HCT116 (cell line): ENCODE measurements at regions of chr4 and their contacts with region 1.

Region 1: DNA sequence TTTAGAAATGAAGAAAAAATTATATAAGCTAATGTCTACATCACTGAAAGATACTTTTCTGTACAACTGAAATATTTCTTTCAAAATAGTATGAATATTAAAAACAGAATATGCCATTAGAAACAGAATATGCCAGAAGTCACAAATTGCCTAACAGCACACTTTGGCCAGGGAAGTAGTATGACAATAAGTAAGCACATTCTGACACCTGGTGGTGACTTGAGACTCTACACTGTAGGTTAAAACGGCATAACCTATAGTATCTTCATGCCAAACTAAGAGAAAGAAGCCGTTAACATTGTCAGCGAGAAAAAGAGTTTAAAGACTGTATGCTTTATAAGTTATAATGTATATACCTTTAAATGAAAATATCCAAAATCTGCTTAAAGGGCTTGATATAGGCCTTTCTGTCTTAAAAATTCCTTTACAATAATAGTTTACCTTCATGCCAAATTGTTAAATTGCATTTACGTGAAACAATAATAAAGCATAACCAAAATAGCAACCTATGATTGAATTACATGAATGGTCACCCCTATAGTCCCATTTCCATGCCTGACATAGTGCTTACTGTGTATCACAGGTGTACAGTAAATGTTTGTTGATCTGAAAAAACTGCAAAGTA is 32.8 kb downstream of the FAM13A start:
- DNase-seq: peak; percentile 65
- ATAC-seq: peak; percentile 93
- H3K4me3 ChIP-seq: no peak overlapping the region
- H3K27ac ChIP-seq: no peak overlapping the region
- H3K4me1 ChIP-seq: no peaks in the 10 kb centered on the region
- H3K27me3 ChIP-seq: no peaks in the 10 kb centered on the region
- CTCF ChIP-seq: peak; percentile 70 to 76 (median 75)
- POLR2A ChIP-seq: no peak
- RAD21 ChIP-seq: peak; percentile 91

Region 2: GRCh38 chr4:88526221-88526815 is 497.8 kb before region 1 on chr4:
- CTCF ChIA-PET with region 1: interaction called, 7 read pairs
- POLR2A ChIA-PET with region 1: no interaction called
- RAD21 ChIA-PET with region 1: no interaction called
- intact Hi-C with region 1: loop called (anchors 1 kb)
- DNase-seq: no peak
- ATAC-seq: no peak
- H3K4me3 ChIP-seq: no peak overlapping the region
- H3K27ac ChIP-seq: no peak overlapping the region
- H3K4me1 ChIP-seq: peaks cover 8 to 24% of the 10 kb centered on the region in 2 experiments; a peak in 3 of 4 replicates
- H3K27me3 ChIP-seq: no peaks in the 10 kb centered on the region
- CTCF ChIP-seq: peak in 2 of 3 experiments; percentile 37 to 39; a peak in 3 of 6 replicates
- POLR2A ChIP-seq: no peak
- RAD21 ChIP-seq: peak; percentile 44

Region 3: DNA sequence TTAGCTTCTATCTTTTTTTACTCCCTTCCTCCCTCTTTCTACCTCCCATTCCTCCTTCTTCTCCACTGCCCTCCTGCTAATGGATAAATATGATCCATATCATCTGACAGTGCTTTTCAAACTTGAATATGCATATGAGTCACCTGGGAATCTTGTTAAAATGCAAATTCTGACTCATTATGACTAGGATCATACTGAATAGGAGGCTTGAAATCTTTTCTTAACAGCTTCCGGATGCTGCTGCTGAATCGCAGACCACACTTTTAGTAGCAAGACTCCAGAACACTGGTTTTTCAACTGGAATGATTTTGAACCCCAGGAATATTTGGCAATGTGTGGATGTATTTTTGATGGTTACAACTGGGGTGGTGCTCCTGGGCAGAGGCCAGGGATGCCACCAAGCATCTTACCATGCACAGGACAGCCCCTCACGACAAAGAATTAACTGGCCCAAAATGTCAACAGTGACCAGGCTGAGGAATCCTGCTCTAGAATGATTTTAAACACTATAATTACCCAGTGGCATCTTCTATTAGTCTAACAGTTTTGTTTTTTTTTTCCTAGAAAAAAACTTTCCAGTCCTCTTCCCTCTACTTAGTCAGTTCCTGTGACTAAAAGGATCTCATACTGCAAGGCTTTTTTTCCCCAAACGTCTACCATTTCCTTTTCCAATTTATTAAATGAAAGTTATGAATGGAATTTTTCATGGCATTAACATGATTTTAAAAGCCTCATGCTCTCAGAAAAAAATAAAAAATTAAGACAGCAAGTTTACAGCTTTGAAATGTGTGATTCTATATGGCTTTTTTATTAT is 490.0 kb before region 1 on chr4:
- CTCF ChIA-PET with region 1: interaction called, 21 read pairs
- POLR2A ChIA-PET with region 1: no interaction called
- RAD21 ChIA-PET with region 1: interaction called, 3 to 4 read pairs
- intact Hi-C with region 1: no loop called
- DNase-seq: no peak
- ATAC-seq: no peak
- H3K4me3 ChIP-seq: no peak overlapping the region
- H3K27ac ChIP-seq: no peak overlapping the region
- H3K4me1 ChIP-seq: no peaks in the 10 kb centered on the region
- H3K27me3 ChIP-seq: no peaks in the 10 kb centered on the region
- CTCF ChIP-seq: no peak
- POLR2A ChIP-seq: no peak
- RAD21 ChIP-seq: no peak

Region 4: DNA sequence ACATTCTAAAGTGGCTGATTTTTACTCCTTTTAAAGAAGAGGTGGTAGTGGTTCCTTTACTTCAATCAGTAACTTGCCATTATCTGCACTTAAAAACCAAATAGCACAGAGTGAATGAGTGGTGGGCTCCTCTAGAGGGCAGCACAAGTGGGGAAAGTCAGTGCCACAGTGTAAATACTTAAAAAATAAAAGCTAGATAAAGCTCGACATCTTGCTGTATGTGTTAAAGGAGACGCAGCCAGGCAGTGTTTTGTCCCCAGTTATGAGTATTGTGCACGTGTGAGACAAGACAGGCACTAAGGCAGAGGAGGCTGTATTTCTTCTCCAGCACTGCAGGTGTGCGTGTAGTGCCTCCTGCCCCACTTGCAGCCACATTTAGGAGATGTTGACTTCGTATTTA is 351.2 kb before region 1 on chr4:
- CTCF ChIA-PET with region 1: interaction called, 10 read pairs
- POLR2A ChIA-PET with region 1: no interaction called
- RAD21 ChIA-PET with region 1: no interaction called
- intact Hi-C with region 1: no loop called
- DNase-seq: no peak
- ATAC-seq: peak; percentile 94
- H3K4me3 ChIP-seq: no peak overlapping the region
- H3K27ac ChIP-seq: no peak overlapping the region
- H3K4me1 ChIP-seq: no peaks in the 10 kb centered on the region
- H3K27me3 ChIP-seq: no peaks in the 10 kb centered on the region
- CTCF ChIP-seq: peak; percentile 33 to 78 (median 74); a peak in 5 of 6 replicates
- POLR2A ChIP-seq: no peak
- RAD21 ChIP-seq: peak; percentile 41; the same call in 1 of the 2 replicates

Region 5: GRCh38 chr4:88706574-88706973 is 317.6 kb before region 1 on chr4:
- CTCF ChIA-PET with region 1: interaction called, 10 read pairs
- POLR2A ChIA-PET with region 1: no interaction called
- RAD21 ChIA-PET with region 1: no interaction called
- intact Hi-C with region 1: loop called (anchors 1 kb)
- DNase-seq: no peak
- ATAC-seq: peak; percentile 52; the same call in 1 of the 2 replicates
- H3K4me3 ChIP-seq: no peak overlapping the region
- H3K27ac ChIP-seq: no peak overlapping the region
- H3K4me1 ChIP-seq: no peaks in the 10 kb centered on the region
- H3K27me3 ChIP-seq: no peaks in the 10 kb centered on the region
- CTCF ChIP-seq: peak in 2 of 3 experiments; percentile 24 to 48; a peak in 3 of 6 replicates
- POLR2A ChIP-seq: no peak
- RAD21 ChIP-seq: peak; percentile 48

Region 6: GRCh38 chr4:88818631-88819470 is 205.3 kb before region 1 on chr4:
- CTCF ChIA-PET with region 1: interaction called, 61 read pairs
- POLR2A ChIA-PET with region 1: no interaction called
- RAD21 ChIA-PET with region 1: interaction called in 1 of 2 experiments, 3 read pairs
- intact Hi-C with region 1: loop called (anchors 1 kb)
- DNase-seq: peak; percentile 31
- ATAC-seq: peak; percentile 73
- H3K4me3 ChIP-seq: no peak overlapping the region
- H3K27ac ChIP-seq: no peak overlapping the region
- H3K4me1 ChIP-seq: peaks cover 6 to 11% of the 10 kb centered on the region in 2 experiments; a peak in 3 of 4 replicates
- H3K27me3 ChIP-seq: no peaks in the 10 kb centered on the region
- CTCF ChIP-seq: peak; percentile 49 to 68 (median 60); a peak in 4 of 6 replicates
- POLR2A ChIP-seq: no peak
- RAD21 ChIP-seq: peak; percentile 86

Region 7: GRCh38 chr4:89213062-89213701 is 189.0 kb after region 1 on chr4:
- CTCF ChIA-PET with region 1: no interaction called
- POLR2A ChIA-PET with region 1: no interaction called
- RAD21 ChIA-PET with region 1: no interaction called
- intact Hi-C with region 1: no loop called
- DNase-seq: no peak
- ATAC-seq: no peak
- H3K4me3 ChIP-seq: no peak overlapping the region
- H3K27ac ChIP-seq: no peak overlapping the region
- H3K4me1 ChIP-seq: no peaks in the 10 kb centered on the region
- H3K27me3 ChIP-seq: no peaks in the 10 kb centered on the region
- CTCF ChIP-seq: no peak
- POLR2A ChIP-seq: no peak
- RAD21 ChIP-seq: no peak

Region 8: GRCh38 chr4:89447548-89447947 is 423.4 kb after region 1 on chr4:
- CTCF ChIA-PET with region 1: no interaction called
- POLR2A ChIA-PET with region 1: no interaction called
- RAD21 ChIA-PET with region 1: no interaction called
- intact Hi-C with region 1: no loop called
- DNase-seq: no peak
- ATAC-seq: no peak
- H3K4me3 ChIP-seq: no peak overlapping the region
- H3K27ac ChIP-seq: no peak overlapping the region
- H3K4me1 ChIP-seq: no peaks in the 10 kb centered on the region
- H3K27me3 ChIP-seq: no peaks in the 10 kb centered on the region
- CTCF ChIP-seq: no peak
- POLR2A ChIP-seq: no peak
- RAD21 ChIP-seq: no peak